Colonic mucosa (tissue), 4 donors: ENCODE measurements at regions of chr10 and their contacts with region 1.

Region 1: GRCh38 chr10:79059859-79060379 is 8.8 kb upstream of the ZMIZ1 start:
- DNase-seq: peak; percentile 76
- H3K4me3 ChIP-seq: no peak overlapping the region
- H3K27ac ChIP-seq: peak overlapping the region; percentile 76
- H3K4me1 ChIP-seq: peaks cover 20% of the 10 kb centered on the region
- H3K27me3 ChIP-seq: no peaks in the 10 kb centered on the region
- CTCF ChIP-seq: no peak

Region 2: GRCh38 chr10:78470267-78471103 is 589.4 kb before region 1 on chr10:
- intact Hi-C with region 1: no loop called
- DNase-seq: peak; percentile 14
- H3K4me3 ChIP-seq: no peak overlapping the region
- H3K27ac ChIP-seq: no peak overlapping the region
- H3K4me1 ChIP-seq: no peaks in the 10 kb centered on the region
- H3K27me3 ChIP-seq: no peaks in the 10 kb centered on the region
- CTCF ChIP-seq: no peak

Region 3: DNA sequence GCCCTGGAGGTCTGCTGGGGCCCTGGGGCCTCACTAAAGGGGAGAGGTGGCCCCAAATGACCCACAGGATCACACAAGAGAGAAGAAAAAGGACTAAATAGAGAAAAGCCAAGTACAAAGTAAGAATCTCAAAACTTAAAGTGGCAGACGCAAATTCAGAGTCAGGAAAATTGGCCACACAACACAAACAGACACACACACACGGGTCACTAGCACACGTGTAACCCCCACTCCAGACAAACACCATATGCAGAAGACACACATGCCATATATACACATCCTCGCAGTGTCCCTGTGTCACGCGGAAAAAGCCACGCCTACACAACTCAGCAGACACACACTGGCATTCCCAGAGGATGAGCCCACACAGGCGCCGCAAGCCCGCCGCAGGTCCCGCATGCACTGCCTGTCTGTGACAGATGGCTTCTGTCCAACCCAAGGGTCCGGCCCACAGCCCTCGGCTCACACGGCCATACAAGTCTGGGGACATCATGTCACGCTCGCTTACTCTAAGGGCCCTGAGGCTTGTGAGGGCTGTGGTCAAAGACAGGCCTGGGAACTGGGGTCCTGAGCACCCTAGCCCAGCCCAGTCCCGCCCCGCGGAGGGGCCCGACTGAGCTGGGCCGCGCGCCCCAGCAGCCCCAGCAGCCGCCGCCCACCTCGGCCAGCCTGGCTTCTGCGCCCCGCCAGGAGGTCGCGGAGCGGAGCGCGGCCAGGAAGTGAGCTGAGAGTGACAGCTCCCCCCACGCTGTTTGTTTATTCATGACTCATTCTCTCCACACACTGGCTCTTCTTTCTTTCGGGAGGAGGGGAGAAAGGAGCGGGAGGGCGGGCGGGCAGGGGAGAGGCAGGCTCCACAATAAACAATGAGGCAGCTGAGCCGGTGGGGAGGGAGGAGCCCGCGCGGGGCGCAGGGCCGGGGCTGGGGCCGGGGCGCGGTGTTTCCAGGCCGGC is 86.7 kb before region 1 on chr10:
- intact Hi-C with region 1: loop called (anchors 5 kb)
- DNase-seq: peak; percentile 66
- H3K4me3 ChIP-seq: peak overlapping the region; percentile 42
- H3K27ac ChIP-seq: peak overlapping the region; percentile 83
- H3K4me1 ChIP-seq: peaks cover 5% of the 10 kb centered on the region
- H3K27me3 ChIP-seq: no peaks in the 10 kb centered on the region
- CTCF ChIP-seq: no peak